Common myeloid progenitor, CD34-positive (primary cell): ENCODE measurements at regions of chr11 and their contacts with region 1.

Region 1: GRCh38 chr11:63882555-63883242 is 34.3 kb downstream of the RCOR2 start:
- DNase-seq: peak; percentile 91 to 98 (median 97)
- H3K4me3 ChIP-seq: peak overlapping the region in 2 of 7 experiments; percentile 14 to 16
- H3K27ac ChIP-seq: peak overlapping the region in 1 of 2 experiments; percentile 55
- H3K4me1 ChIP-seq: peaks cover 15 to 73% (median 57%) of the 10 kb centered on the region in 4 experiments
- H3K27me3 ChIP-seq: no peaks in the 10 kb centered on the region

Region 2: GRCh38 chr11:63762654-63763495 is 119.8 kb before region 1 on chr11:
- CTCF ChIA-PET with region 1: no interaction called
- POLR2A ChIA-PET with region 1: no interaction called
- DNase-seq: no peak
- H3K4me3 ChIP-seq: no peak overlapping the region
- H3K27ac ChIP-seq: no peak overlapping the region
- H3K4me1 ChIP-seq: peaks cover 0 to 15% (median 15%) of the 10 kb centered on the region in 4 experiments
- H3K27me3 ChIP-seq: no peaks in the 10 kb centered on the region

Region 3: DNA sequence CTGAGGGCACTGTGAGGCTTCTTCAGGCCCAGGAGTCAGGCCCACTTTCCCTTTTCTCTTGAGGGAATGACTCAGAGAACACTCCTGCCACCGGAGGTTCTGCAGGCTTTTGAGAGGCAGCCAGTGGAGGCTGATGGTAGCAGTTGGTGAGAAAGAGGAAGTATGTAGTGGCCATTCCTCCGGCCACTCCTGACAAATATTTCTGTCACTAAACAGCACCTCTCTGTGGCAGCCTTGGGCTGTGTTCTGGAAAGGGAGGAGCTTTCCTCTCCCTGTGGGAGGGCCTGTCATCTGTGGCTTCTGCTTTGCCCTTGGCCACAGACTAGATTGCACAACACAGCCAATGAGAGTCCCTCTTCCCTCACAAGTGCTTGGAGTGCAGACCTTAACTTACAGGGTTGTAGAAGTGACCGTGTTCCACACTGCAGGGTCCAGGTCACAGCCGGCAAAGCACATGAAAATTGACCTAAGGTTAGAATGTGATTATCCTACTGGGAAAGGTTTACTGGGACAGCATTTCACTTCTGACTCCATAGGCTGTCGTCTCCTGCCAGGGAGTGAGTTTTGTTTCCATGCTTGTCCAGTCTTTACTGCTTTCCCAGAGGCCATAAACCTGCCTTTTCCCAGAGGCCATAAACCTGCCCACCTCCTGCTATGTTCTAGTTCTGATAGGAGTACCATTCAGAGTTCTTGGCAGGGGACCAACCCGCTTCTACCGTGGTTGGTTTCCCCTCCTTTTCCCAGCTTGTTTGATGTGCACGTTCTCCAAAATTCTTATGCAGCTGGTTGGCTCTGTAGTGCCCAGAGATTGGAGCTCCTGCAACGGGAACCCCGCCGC is 10.5 kb before region 1 on chr11:
- CTCF ChIA-PET with region 1: interaction called, 19 read pairs
- POLR2A ChIA-PET with region 1: no interaction called
- DNase-seq: peak; percentile 84 to 96 (median 96)
- H3K4me3 ChIP-seq: peak overlapping the region in 3 of 7 experiments; percentile 3 to 59 (median 48)
- H3K27ac ChIP-seq: no peak overlapping the region
- H3K4me1 ChIP-seq: peaks cover 17 to 83% (median 76%) of the 10 kb centered on the region in 4 experiments
- H3K27me3 ChIP-seq: no peaks in the 10 kb centered on the region

Region 4: DNA sequence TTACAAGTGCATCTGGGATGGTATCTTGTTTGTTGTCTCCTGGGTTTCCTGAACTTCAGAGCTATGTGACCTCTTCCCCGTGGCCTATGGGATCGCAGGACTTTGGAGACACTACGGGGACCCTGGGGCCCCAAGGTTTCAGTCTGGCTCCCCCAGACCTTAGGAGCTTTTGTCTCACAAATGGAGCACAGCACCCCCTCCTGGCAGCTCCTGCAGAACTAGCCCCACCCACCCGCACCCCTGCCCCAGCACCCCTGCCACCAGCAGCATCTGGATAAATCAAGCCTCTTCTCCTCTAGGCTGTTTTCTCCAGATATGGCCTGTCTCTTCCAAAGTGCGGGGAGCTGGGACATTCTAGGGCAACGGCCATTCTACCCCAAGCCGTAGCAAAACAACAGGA is 23.9 kb after region 1 on chr11:
- CTCF ChIA-PET with region 1: interaction called, 17 read pairs
- POLR2A ChIA-PET with region 1: no interaction called
- DNase-seq: peak; percentile 51 to 71 (median 67)
- H3K4me3 ChIP-seq: no peak overlapping the region
- H3K27ac ChIP-seq: no peak overlapping the region
- H3K4me1 ChIP-seq: peaks cover 0 to 37% (median 21%) of the 10 kb centered on the region in 4 experiments
- H3K27me3 ChIP-seq: no peaks in the 10 kb centered on the region

Region 5: DNA sequence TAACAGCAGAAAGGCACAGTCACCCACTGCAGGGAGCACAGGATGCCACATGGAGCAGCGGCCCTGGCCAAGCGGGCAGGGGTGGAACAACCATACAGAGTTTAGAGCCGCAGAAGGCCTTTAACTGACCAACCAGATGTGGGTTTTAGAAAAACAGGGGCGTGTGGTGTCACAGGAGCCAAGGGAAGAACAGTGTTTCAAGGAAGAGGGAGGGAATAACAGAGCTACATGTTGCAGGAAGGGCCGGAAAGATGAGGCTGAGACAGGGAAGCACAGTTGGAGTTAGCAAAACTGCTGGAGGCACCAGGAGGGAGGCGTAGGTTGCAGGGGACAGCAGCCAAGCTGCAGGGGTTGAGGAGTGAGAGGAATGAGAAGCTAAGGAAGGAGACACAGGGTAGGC is 48.3 kb after region 1 on chr11:
- CTCF ChIA-PET with region 1: no interaction called
- POLR2A ChIA-PET with region 1: no interaction called
- DNase-seq: no peak
- H3K4me3 ChIP-seq: no peak overlapping the region
- H3K27ac ChIP-seq: no peak overlapping the region
- H3K4me1 ChIP-seq: no peaks in the 10 kb centered on the region
- H3K27me3 ChIP-seq: peaks cover 0 to 2% (median 0%) of the 10 kb centered on the region in 5 experiments